ENCODE measurements at regions of chr22 and their contacts with region 1.

Region 1: GRCh38 chr22:37887610-37888378 is 18.3 kb upstream of the MICALL1 start:
- DNase-seq: peak; percentile 81
- H3K4me3 ChIP-seq: no peak overlapping the region
- H3K4me3 Mint-ChIP-seq: no peak overlapping the region
- H3K27ac Mint-ChIP-seq: peak overlapping the region; percentile 74
- H3K4me1 ChIP-seq: peaks cover 17% of the 10 kb centered on the region
- H3K4me1 Mint-ChIP-seq: peaks cover 24% of the 10 kb centered on the region
- H3K27me3 ChIP-seq: no peaks in the 10 kb centered on the region
- H3K27me3 Mint-ChIP-seq: no peaks in the 10 kb centered on the region
- CTCF ChIP-seq: peak; percentile 48 to 52

Region 2: GRCh38 chr22:37953437-37954179 is 65.8 kb after region 1 on chr22 and contains the starts of genes C22orf23 and POLR2F:
- CTCF ChIA-PET with region 1: interaction called, 3 read pairs
- POLR2A ChIA-PET with region 1: no interaction called
- intact Hi-C with region 1: loop called (anchors 5 kb)
- DNase-seq: peak; percentile 93
- H3K4me3 ChIP-seq: peak within 1 kb of the TSS; percentile 69
- H3K4me3 Mint-ChIP-seq: peak within 1 kb of the TSS; percentile 80
- H3K27ac Mint-ChIP-seq: peak within 1 kb of the TSS; percentile 90
- H3K4me1 ChIP-seq: peaks cover 5% of the 10 kb centered on the region; the same call in 1 of the 2 replicates
- H3K4me1 Mint-ChIP-seq: peaks cover 10% of the 10 kb centered on the region
- H3K27me3 ChIP-seq: no peaks in the 10 kb centered on the region
- H3K27me3 Mint-ChIP-seq: no peaks in the 10 kb centered on the region
- CTCF ChIP-seq: peak in 1 of 2 experiments; percentile 4
- total RNA-seq, gene C22orf23: not detected in 2 replicates
- total RNA-seq, gene POLR2F: 116 and 122 TPM in 2 replicates

Measured in Caco-2 (cell line).